ENCODE measurements at regions of chr15 and their contacts with region 1.

Region 1: DNA sequence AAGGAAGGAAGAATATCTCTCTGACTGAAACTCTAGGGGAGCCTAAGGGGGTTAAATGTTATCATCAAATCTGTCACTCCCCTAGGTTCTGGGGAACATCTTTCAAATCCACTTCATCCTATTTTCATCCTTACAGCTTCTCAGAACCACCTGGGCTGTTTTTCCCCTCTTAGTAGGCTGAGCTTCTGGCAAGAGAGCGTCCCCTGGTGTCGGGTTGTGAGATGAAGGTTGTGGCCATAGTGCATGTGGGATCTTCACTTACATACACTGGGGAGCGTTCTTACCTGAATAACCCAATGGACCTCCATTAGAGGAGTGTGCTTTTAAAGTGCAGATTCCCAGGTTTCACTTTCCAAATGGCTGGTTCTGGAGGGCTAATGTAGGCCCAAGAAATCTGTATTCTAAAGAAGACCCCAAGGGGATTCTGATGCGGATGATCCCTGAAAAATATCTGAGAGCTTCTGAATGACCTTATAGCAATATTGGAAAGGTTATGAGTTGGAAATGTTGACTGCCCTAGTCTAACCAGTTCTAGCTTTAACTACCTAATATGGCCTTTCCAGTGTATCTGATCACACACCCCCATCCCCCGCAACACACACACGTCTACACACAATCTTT is 663.7 kb downstream of the AGBL1 start:
- DNase-seq: peak; percentile 24 to 74
- ATAC-seq: peak in 1 of 3 donors; percentile 40
- H3K4me3 ChIP-seq: no peak overlapping the region
- H3K4me3 Mint-ChIP-seq: no peak overlapping the region
- H3K27ac ChIP-seq: no peak overlapping the region
- H3K27ac Mint-ChIP-seq: no peak overlapping the region
- H3K4me1 ChIP-seq: no peaks in the 10 kb centered on the region
- H3K4me1 Mint-ChIP-seq: no peaks in the 10 kb centered on the region
- H3K27me3 ChIP-seq: no peaks in the 10 kb centered on the region
- H3K27me3 Mint-ChIP-seq: peaks cover 0 to 4% of the 10 kb centered on the region in 2 donors
- CTCF ChIP-seq: peak; percentile 53

Region 2: GRCh38 chr15:85858586-85859375 is 884.6 kb before region 1 on chr15:
- intact Hi-C with region 1: loop called (anchors 2 kb)
- DNase-seq: peak; percentile 63 to 86
- ATAC-seq: peak; percentile 83 to 90 (median 89)
- H3K4me3 ChIP-seq: no peak overlapping the region
- H3K4me3 Mint-ChIP-seq: peak overlapping the region; percentile 28
- H3K27ac ChIP-seq: no peak overlapping the region
- H3K27ac Mint-ChIP-seq: no peak overlapping the region
- H3K4me1 ChIP-seq: peaks cover 7% of the 10 kb centered on the region
- H3K4me1 Mint-ChIP-seq: peaks cover 5 to 6% of the 10 kb centered on the region in 2 donors
- H3K27me3 ChIP-seq: peaks cover 7% of the 10 kb centered on the region
- H3K27me3 Mint-ChIP-seq: peaks cover 12 to 29% of the 10 kb centered on the region in 2 donors
- CTCF ChIP-seq: peak; percentile 83

Region 3: DNA sequence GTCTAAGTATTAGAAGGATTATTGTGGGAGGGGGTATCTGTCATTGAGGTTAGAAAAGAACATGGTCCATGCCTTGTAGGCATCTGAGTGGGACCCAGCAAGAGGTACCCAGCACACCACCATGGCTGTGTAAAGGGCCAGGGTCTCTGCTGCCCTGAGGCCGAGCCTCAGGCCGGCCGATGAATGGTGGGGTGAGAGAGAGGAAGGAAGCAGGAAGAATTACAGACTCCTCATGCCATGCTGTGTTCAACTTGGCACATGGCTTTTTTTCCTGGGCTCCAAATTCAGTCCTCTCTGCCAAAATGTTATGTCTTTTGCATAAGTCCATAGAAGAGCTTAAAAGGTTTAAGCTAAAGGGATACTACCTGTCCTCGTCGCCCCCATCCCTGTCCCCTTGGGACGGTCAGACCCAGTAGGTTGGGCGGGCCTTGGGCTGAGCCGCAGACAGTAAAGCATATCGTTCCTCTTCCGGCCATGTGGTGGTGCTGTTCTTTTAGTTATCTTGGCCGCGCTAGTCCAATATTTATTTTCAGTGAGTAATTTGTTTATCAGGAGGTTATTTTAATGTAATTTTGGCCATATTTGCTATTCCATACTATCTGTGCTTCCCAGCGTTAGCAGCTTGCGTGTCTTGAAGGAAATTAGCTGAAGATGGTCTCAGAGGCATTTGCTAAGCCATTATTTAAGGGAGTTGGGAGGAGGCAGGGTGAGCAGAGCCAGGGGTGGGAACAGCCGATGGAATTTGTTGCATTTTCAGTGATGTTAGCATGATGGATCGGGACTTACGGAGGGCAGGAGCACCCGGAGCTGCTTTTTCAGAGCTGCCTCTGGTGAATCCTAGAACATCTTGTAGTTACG is 511.3 kb before region 1 on chr15:
- intact Hi-C with region 1: loop called (anchors 2 kb)
- DNase-seq: peak in 1 of 2 donors; percentile 70
- ATAC-seq: peak in 1 of 3 donors; percentile 71
- H3K4me3 ChIP-seq: no peak overlapping the region
- H3K4me3 Mint-ChIP-seq: no peak overlapping the region
- H3K27ac ChIP-seq: no peak overlapping the region
- H3K27ac Mint-ChIP-seq: no peak overlapping the region
- H3K4me1 ChIP-seq: no peaks in the 10 kb centered on the region
- H3K4me1 Mint-ChIP-seq: peaks cover 5 to 12% of the 10 kb centered on the region in 2 donors
- H3K27me3 ChIP-seq: peaks cover 3% of the 10 kb centered on the region
- H3K27me3 Mint-ChIP-seq: peaks cover 16 to 41% of the 10 kb centered on the region in 2 donors
- CTCF ChIP-seq: peak; percentile 51

Region 4: DNA sequence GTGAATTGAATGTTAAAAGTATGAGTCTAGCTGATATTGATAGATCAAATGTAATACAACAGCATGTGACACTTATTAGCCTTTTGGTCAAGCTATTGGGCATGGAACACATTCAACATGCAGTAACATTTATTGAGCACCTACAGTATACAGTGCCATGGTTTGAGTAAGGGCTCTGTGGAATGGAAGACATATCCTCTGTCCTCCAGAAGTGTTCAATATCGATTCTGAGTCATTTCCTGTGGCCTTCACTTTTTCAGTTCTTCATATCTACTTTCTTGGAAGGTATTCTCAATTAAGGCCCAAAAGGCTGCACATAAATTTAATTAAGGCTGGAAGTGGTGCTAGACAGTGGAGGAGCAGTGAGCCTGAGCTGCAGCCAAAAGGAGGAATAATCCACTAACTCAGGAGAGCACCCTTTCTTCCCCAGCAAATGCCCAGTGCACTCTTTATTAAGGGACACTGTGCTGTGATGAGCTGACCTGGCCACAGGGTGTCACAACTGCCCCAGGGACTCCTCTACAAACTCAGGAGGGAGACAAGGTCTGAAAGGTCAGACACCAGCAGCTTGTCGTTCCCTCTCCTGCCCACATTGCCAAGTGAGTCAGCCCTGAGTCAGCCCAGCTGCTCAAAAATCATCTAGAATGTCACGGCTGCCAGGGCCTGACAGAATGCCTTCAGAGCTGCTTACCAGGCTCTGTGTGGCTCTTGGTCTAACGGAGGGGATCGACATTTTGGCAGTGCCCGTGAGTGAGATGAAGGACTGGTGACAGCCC is 118.9 kb before region 1 on chr15:
- intact Hi-C with region 1: loop called (anchors 1 kb)
- DNase-seq: peak; percentile 16 to 68
- ATAC-seq: peak; percentile 84 to 95 (median 86)
- H3K4me3 ChIP-seq: no peak overlapping the region
- H3K4me3 Mint-ChIP-seq: no peak overlapping the region
- H3K27ac ChIP-seq: no peak overlapping the region
- H3K27ac Mint-ChIP-seq: no peak overlapping the region
- H3K4me1 ChIP-seq: peaks cover 7% of the 10 kb centered on the region
- H3K4me1 Mint-ChIP-seq: peaks cover 0 to 6% of the 10 kb centered on the region in 2 donors
- H3K27me3 ChIP-seq: no peaks in the 10 kb centered on the region
- H3K27me3 Mint-ChIP-seq: peaks cover 10 to 40% of the 10 kb centered on the region in 2 donors
- CTCF ChIP-seq: no peak